Panc1 (cell line): ENCODE measurements at regions of chr3 and their contacts with region 1.

Region 1: GRCh38 chr3:154050766-154051165 is 70.4 kb upstream of the ARHGEF26 start:
- DNase-seq: no peak
- ATAC-seq: no peak
- H3K4me3 ChIP-seq: no peak overlapping the region
- H3K27ac ChIP-seq: no peak overlapping the region
- H3K4me1 ChIP-seq: no peaks in the 10 kb centered on the region
- H3K27me3 ChIP-seq: no peaks in the 10 kb centered on the region
- CTCF ChIP-seq: no peak

Region 2: DNA sequence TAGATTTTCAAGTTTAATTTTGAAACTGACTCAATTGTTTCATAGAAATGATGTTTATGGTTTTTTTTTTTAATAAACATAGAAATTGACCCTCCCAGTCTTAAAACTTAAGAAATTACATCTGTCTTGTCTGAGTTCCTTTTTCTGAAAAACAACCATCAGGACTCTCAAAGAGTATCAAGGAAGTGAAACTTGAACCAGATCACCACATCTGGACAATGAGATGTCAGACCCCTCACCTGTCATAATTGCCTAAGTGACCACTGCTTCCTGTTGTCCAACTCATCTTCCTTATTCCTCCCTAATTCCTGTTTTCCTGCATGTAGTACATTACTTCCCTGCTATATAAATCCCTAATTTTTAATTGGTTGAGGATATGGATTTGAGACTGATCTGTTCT is 371.1 kb before region 1 on chr3:
- CTCF ChIA-PET with region 1: no interaction called
- POLR2A ChIA-PET with region 1: interaction called, 14 read pairs
- in situ Hi-C with region 1: no loop called
- intact Hi-C with region 1: no loop called
- DNase-seq: no peak
- ATAC-seq: no peak
- H3K4me3 ChIP-seq: no peak overlapping the region
- H3K27ac ChIP-seq: no peak overlapping the region
- H3K4me1 ChIP-seq: no peaks in the 10 kb centered on the region
- H3K27me3 ChIP-seq: no peaks in the 10 kb centered on the region
- CTCF ChIP-seq: no peak